Naive thymus-derived CD4-positive, alpha-beta T cell (primary cell): ENCODE measurements at regions of chr1 and their contacts with region 1.

Region 1: GRCh38 chr1:116139592-116140134 is 28.5 kb downstream of the MAB21L3 start:
- DNase-seq: no peak
- ATAC-seq: no peak
- H3K4me3 ChIP-seq: no peak overlapping the region
- H3K4me3 Mint-ChIP-seq: no peak overlapping the region
- H3K27ac ChIP-seq: no peak overlapping the region
- H3K27ac Mint-ChIP-seq: no peak overlapping the region
- H3K4me1 ChIP-seq: no peaks in the 10 kb centered on the region
- H3K4me1 Mint-ChIP-seq: peaks cover 0 to 10% (median 5%) of the 10 kb centered on the region in 7 donors
- H3K27me3 ChIP-seq: no peaks in the 10 kb centered on the region
- H3K27me3 Mint-ChIP-seq: peaks cover 0 to 26% (median 5%) of the 10 kb centered on the region in 5 donors

Region 2: GRCh38 chr1:116151739-116152576 is 12.3 kb after region 1 on chr1:
- CTCF ChIA-PET with region 1: interaction called, 55 read pairs
- POLR2A ChIA-PET with region 1: interaction called, 12 read pairs
- intact Hi-C with region 1: loop called in 1 of 2 experiments (anchors 1 kb)
- DNase-seq: peak; percentile 61 to 89 (median 76)
- ATAC-seq: peak; percentile 97
- H3K4me3 ChIP-seq: peak overlapping the region; percentile 48
- H3K4me3 Mint-ChIP-seq: peak overlapping the region; percentile 70 to 87 (median 82)
- H3K27ac ChIP-seq: peak overlapping the region; percentile 74
- H3K27ac Mint-ChIP-seq: peak overlapping the region; percentile 63 to 98 (median 92)
- H3K4me1 ChIP-seq: peaks cover 7 to 21% of the 10 kb centered on the region in 2 donors
- H3K4me1 Mint-ChIP-seq: peaks cover 9 to 32% (median 25%) of the 10 kb centered on the region in 7 donors
- H3K27me3 ChIP-seq: no peaks in the 10 kb centered on the region
- H3K27me3 Mint-ChIP-seq: peaks cover 0 to 31% (median 0%) of the 10 kb centered on the region in 5 donors

Region 3: GRCh38 chr1:116168277-116169097 is 28.8 kb after region 1 on chr1:
- CTCF ChIA-PET with region 1: interaction called, 15 read pairs
- POLR2A ChIA-PET with region 1: interaction called, 4 read pairs
- intact Hi-C with region 1: loop called (anchors 1 kb)
- DNase-seq: peak; percentile 74 to 88 (median 83)
- ATAC-seq: peak; percentile 97
- H3K4me3 ChIP-seq: peak overlapping the region; percentile 75
- H3K4me3 Mint-ChIP-seq: peak overlapping the region; percentile 70 to 90 (median 88)
- H3K27ac ChIP-seq: peak overlapping the region; percentile 60
- H3K27ac Mint-ChIP-seq: peak overlapping the region; percentile 81 to 96 (median 92)
- H3K4me1 ChIP-seq: peaks cover 9% of the 10 kb centered on the region in 2 donors
- H3K4me1 Mint-ChIP-seq: peaks cover 14 to 23% (median 19%) of the 10 kb centered on the region in 7 donors
- H3K27me3 ChIP-seq: no peaks in the 10 kb centered on the region
- H3K27me3 Mint-ChIP-seq: peaks cover 0 to 14% (median 0%) of the 10 kb centered on the region in 5 donors

Region 4: DNA sequence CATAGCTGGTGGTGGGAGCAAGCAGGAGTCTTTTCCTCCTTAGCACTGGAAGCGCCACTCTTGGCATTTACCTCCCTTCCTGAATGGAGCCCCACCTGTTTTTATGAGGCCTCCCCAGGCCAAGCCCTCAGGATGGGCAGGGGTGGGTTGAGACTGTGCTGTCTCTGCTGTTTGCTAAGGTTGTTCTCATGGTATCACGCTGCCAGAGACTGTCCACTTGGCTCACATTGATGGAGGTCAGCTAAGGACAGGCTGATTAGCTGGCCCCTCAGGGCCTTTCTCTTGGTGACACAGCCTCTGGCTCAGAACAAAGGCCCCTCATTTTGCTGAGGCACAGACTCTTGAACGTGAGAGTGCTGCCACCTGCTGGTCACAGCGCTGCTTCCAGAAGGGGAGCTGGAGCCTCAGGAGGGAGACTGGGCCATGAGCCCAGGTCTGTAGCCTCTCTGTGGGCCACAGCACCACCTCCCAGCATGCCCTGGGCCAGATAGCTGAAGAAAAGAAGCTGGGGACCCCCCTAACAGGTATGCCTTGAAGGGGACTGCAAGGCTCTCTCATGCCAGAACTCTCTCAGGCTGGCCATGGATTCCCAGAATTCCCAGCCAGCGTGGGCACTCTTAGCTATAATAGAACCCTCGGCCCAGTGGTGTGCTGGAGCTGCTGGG is 345.5 kb after region 1 on chr1:
- CTCF ChIA-PET with region 1: interaction called, 372 read pairs
- POLR2A ChIA-PET with region 1: interaction called, 5 read pairs
- intact Hi-C with region 1: loop called (anchors 1 kb)
- DNase-seq: peak; percentile 59 to 84 (median 76)
- ATAC-seq: peak; percentile 93
- H3K4me3 ChIP-seq: no peak overlapping the region
- H3K4me3 Mint-ChIP-seq: no peak overlapping the region
- H3K27ac ChIP-seq: no peak overlapping the region
- H3K27ac Mint-ChIP-seq: peak overlapping the region in 1 of 9 donors; percentile 21
- H3K4me1 ChIP-seq: no peaks in the 10 kb centered on the region
- H3K4me1 Mint-ChIP-seq: peaks cover 0 to 15% (median 0%) of the 10 kb centered on the region in 7 donors
- H3K27me3 ChIP-seq: no peaks in the 10 kb centered on the region
- H3K27me3 Mint-ChIP-seq: peaks cover 0 to 8% (median 0%) of the 10 kb centered on the region in 5 donors

Region 5: DNA sequence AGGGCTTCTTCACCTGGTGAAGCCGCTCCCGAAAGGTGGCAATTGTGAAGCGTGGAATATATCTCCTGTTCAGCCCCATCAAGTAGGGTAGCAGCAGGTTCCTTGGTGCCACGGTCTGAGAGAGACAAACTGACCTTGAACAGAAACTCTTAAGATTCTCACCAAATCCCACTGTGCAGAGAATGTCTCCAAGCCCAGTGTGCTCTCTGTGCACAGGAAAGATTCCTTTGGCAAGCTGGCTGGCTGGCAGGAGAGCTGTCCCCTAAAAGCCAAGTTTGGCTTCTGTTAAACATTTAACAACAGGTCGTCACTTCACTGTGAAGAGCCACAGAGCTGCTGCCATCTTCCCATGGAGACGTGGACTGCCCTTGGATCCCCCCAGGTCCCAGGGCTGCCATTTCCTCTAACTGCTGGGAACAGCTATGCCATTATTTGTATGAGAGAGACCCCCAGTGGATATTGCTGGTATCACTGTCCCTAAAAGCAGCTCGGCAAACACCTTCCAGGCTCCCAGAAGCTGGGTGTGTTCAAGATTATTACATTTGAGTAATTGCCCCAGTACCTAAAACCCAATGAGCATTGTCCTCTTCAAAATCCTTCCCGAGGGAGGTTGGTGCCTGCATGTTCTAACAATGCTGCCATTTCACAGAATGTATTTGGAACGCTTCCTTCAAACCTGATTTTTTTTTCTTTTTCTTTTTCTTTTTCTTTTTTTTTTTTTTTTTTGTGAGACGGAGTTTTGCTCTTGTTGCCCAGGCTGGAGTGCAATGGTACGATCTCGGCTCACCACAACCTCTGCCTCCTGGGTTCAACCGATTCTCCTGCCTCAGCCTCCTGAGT is 359.3 kb after region 1 on chr1:
- CTCF ChIA-PET with region 1: interaction called, 372 read pairs
- POLR2A ChIA-PET with region 1: interaction called, 8 read pairs
- intact Hi-C with region 1: loop called (anchors 1 kb)
- DNase-seq: peak in 8 of 9 donors; percentile 20 to 58 (median 44)
- ATAC-seq: peak; percentile 82
- H3K4me3 ChIP-seq: no peak overlapping the region
- H3K4me3 Mint-ChIP-seq: peak overlapping the region in 1 of 10 donors; percentile 13
- H3K27ac ChIP-seq: no peak overlapping the region
- H3K27ac Mint-ChIP-seq: peak overlapping the region in 3 of 9 donors; percentile 21 to 36 (median 28)
- H3K4me1 ChIP-seq: peaks cover 8 to 16% of the 10 kb centered on the region in 2 donors
- H3K4me1 Mint-ChIP-seq: peaks cover 20 to 66% (median 24%) of the 10 kb centered on the region in 7 donors
- H3K27me3 ChIP-seq: no peaks in the 10 kb centered on the region
- H3K27me3 Mint-ChIP-seq: no peaks in the 10 kb centered on the region

Region 6: DNA sequence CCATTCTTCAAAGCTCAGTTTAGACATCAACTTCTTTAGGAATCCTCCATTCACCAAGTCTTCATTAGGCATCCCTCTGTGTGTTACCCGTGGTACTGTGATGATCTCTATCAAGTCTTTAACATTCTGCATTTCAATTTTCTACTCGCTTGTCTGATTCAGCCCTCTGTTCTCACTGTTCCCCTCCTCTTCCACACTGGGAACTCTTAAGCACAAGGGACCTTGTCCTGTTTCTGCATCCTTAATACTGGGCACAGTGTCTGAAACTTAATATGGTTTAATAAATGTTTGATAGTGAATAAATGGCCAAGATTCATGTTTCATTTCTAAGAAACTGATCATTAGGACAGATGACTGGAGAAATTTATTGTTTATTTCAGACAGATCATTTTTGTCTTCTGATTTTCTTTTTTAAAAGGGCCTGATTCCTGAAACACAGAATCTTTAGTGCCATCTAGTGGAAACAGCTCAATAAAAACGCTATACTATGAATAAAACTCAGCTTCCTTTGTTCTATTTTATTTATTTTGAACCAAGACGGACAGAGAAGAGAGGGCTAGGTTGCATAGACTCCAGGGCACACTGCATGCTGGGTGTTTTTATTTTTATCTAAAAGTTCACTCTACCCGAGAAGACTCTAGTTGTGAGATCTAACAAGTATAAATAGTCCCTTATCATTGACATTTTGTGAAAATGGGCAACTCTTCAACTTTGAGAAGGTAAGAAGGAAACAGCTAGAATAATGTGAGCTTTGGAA is 988.8 kb after region 1 on chr1:
- CTCF ChIA-PET with region 1: no interaction called
- POLR2A ChIA-PET with region 1: no interaction called
- intact Hi-C with region 1: loop called in 1 of 2 experiments (anchors 1 kb)
- DNase-seq: peak in 5 of 9 donors; percentile 24 to 42 (median 31)
- ATAC-seq: peak; percentile 61
- H3K4me3 ChIP-seq: no peak overlapping the region
- H3K4me3 Mint-ChIP-seq: no peak overlapping the region
- H3K27ac ChIP-seq: no peak overlapping the region
- H3K27ac Mint-ChIP-seq: no peak overlapping the region
- H3K4me1 ChIP-seq: no peaks in the 10 kb centered on the region
- H3K4me1 Mint-ChIP-seq: peaks cover 0 to 5% (median 5%) of the 10 kb centered on the region in 7 donors
- H3K27me3 ChIP-seq: no peaks in the 10 kb centered on the region
- H3K27me3 Mint-ChIP-seq: peaks cover 5 to 30% (median 12%) of the 10 kb centered on the region in 5 donors